ENCODE measurements at regions of chr18 and their contacts with region 1.

Region 1: GRCh38 chr18:74834424-74835296 is 237.0 kb downstream of the ZNF407 start:
- DNase-seq: no peak
- ATAC-seq: no peak
- H3K4me3 ChIP-seq: no peak overlapping the region
- H3K4me3 Mint-ChIP-seq: no peak overlapping the region
- H3K27ac ChIP-seq: no peak overlapping the region
- H3K27ac Mint-ChIP-seq: no peak overlapping the region
- H3K4me1 ChIP-seq: no peaks in the 10 kb centered on the region
- H3K4me1 Mint-ChIP-seq: peaks cover 17% of the 10 kb centered on the region
- H3K27me3 ChIP-seq: no peaks in the 10 kb centered on the region
- H3K27me3 Mint-ChIP-seq: no peaks in the 10 kb centered on the region
- CTCF ChIP-seq: no peak

Region 2: DNA sequence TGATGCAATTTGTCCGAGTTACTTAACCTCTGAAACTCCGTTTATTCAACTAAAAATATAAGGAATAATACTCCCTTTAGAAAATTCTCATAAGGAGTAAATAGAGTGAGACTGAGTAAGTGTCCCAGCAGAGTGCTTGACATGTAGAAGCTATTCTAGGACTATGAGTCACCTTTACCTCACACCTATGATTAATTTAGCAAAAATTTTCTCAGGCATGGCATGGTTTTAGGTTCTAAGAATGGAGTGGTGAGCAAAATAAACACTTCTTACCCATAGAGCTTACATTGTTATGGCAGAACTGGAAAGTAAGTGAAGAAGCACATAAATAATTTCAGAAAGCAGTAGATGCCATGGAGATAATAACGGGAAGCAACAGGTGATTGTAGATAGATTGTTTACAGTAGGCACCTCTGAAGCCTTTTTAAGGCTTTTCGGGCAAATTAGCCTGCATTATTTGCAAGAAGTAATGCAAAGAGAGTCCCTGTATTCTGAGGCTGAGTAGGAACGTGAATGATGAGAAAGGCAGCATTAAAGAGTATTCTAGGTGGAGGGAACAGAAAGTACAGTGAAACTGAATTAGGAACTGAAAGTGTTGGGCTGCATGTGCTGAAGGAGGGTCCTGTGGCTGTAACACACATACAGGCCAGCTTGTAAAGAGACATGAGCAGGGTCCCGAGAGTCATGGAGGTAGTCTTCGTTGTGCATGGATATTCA is 27.8 kb before region 1 on chr18:
- CTCF ChIA-PET with region 1: no interaction called
- POLR2A ChIA-PET with region 1: no interaction called
- intact Hi-C with region 1: loop called in 1 of 2 experiments (anchors 1 kb)
- DNase-seq: no peak
- ATAC-seq: no peak
- H3K4me3 ChIP-seq: no peak overlapping the region
- H3K4me3 Mint-ChIP-seq: no peak overlapping the region
- H3K27ac ChIP-seq: no peak overlapping the region
- H3K27ac Mint-ChIP-seq: no peak overlapping the region
- H3K4me1 ChIP-seq: no peaks in the 10 kb centered on the region
- H3K4me1 Mint-ChIP-seq: no peaks in the 10 kb centered on the region
- H3K27me3 ChIP-seq: no peaks in the 10 kb centered on the region
- H3K27me3 Mint-ChIP-seq: no peaks in the 10 kb centered on the region
- CTCF ChIP-seq: no peak